ENCODE measurements at regions of chr5 and their contacts with region 1.

Region 1: DNA sequence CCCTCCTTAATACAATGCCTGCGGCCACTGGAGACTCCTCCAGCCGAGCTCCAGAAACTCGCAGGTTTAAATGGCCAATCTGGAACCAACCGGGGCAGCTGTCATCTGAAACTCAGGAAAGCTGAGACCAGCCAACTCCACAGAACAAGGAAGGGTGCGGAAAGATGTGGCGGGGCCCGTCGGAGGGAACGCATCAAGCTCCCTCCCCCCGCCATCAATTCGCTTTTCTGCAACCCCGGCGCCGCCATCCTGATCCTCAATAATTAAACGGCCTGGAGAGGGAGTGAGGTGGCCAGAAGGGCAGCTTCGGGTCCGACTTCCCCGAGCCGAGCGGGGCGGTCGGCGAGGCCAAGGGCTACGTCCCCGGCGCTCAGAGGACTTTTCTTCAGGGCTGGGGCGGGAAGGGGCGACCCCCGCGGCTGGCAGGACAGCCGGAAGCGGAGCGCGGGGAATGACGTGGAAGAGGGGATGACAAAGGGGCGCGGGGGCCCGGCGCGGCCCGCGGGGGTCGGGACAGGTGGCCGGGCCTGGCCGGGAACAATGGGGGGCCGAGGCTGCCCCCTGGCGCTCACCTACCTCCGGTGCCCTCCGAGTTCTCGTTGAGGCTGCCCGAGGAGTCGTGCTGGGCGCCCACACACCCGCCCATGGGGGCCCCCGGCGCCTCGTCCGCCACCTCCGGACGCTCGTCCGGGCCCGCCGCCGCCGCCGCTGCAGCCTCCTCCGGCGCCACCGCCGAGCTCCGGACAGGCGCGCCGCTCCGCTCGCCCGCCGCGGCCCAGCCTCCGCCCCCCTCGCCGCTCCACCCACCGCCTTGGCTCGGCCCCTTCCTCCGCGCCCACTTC is at the start of gene UBTD2:
- DNase-seq: peak; percentile 91
- H3K4me3 Mint-ChIP-seq: peak within 1 kb of the TSS; percentile 96
- H3K27ac Mint-ChIP-seq: peak within 1 kb of the TSS; percentile 92
- H3K4me1 Mint-ChIP-seq: peaks cover 13% of the 10 kb centered on the region
- H3K27me3 Mint-ChIP-seq: no peaks in the 10 kb centered on the region
- CTCF ChIP-seq: peak; percentile 80
- total RNA-seq, gene UBTD2: 18.8 and 21.1 TPM in 2 replicates

Region 2: DNA sequence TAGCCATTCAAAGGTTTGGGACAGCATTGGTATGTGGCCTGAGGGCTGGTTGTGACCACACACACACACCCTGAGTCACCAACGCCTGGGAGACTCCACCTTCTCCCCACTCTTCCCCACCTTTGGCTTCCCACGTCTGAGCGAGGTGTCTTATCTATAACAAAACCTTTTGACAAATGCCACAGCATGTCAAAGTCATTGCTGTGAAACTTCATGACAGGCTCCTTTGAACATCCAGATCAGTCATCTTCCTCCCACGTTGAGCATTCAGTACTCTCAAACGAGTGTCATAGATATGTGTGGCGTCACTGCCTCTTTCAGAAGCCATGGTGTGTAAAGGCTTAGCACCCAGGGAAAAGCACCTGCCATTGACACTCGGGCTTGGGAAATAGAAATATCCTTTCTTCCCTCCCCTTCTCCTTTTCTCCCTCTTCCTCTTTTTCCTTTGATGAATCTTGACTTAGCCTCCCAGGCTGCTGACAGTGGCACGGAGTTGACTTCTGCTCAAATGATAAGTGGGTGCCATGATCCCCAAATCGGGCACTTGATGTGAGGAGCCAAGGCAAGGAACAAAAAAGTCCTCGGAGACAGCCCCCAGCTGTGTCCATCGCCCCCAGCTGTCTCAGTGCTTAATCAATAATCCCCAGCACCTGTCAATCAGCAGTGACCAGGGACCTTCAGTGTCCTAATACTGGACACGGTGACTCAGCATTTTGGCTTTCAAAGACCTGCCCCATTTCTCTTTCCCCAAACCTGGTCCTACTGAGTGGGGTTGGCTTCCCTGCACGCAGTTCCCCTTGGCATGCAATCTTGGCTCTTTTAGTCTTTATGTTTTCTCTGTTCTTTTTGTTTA is 749.0 kb before region 1 on chr5:
- CTCF ChIA-PET with region 1: interaction called, 10 read pairs
- intact Hi-C with region 1: no loop called
- DNase-seq: no peak
- H3K4me3 Mint-ChIP-seq: no peak overlapping the region
- H3K27ac Mint-ChIP-seq: no peak overlapping the region
- H3K4me1 Mint-ChIP-seq: peaks cover 11% of the 10 kb centered on the region
- H3K27me3 Mint-ChIP-seq: peaks cover 32% of the 10 kb centered on the region
- CTCF ChIP-seq: no peak

Region 3: DNA sequence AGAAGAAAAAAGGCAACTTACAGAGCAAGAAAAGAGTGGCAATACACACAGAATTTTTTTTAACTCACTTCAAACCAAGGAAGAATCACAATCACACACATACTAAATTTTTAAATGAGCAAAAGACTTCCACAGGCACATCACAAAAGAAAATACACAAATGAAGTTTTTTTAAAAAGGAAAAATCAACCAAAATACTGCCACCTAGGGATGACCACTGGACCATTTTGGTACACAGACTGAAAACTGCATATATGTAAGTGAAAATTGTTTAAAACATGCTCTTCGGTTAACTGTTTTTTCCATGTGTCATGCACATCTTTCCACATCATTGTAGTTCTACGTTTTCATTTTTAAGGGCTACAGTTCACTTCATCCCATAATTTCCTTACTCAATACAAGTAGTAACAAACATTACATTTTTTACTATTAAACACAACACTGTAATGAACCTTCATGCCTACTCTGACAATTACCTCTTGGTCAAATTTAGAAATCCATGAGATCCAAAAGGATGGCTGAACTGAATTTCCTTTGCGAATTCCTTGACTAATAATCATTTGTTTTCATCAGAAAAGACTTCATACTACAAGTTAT is 355.8 kb before region 1 on chr5:
- CTCF ChIA-PET with region 1: no interaction called
- intact Hi-C with region 1: no loop called
- DNase-seq: no peak
- H3K4me3 Mint-ChIP-seq: no peak overlapping the region
- H3K27ac Mint-ChIP-seq: no peak overlapping the region
- H3K4me1 Mint-ChIP-seq: peaks cover 11% of the 10 kb centered on the region
- H3K27me3 Mint-ChIP-seq: no peaks in the 10 kb centered on the region
- CTCF ChIP-seq: peak; percentile 54

Region 4: GRCh38 chr5:172106511-172107356 is 176.5 kb before region 1 on chr5:
- CTCF ChIA-PET with region 1: interaction called, 7 read pairs
- intact Hi-C with region 1: loop called (anchors 2 kb)
- DNase-seq: peak; percentile 72
- H3K4me3 Mint-ChIP-seq: no peak overlapping the region
- H3K27ac Mint-ChIP-seq: no peak overlapping the region
- H3K4me1 Mint-ChIP-seq: peaks cover 36% of the 10 kb centered on the region
- H3K27me3 Mint-ChIP-seq: no peaks in the 10 kb centered on the region
- CTCF ChIP-seq: peak; percentile 98

Region 5: GRCh38 chr5:172188033-172188892 is 95.0 kb before region 1 on chr5 and contains the start of gene STK10:
- CTCF ChIA-PET with region 1: interaction called, 6 read pairs
- intact Hi-C with region 1: loop called (anchors 5 kb)
- DNase-seq: peak; percentile 96
- H3K4me3 Mint-ChIP-seq: peak within 1 kb of the TSS; percentile 81
- H3K27ac Mint-ChIP-seq: peak within 1 kb of the TSS; percentile 71
- H3K4me1 Mint-ChIP-seq: peaks cover 20% of the 10 kb centered on the region
- H3K27me3 Mint-ChIP-seq: peaks cover 15% of the 10 kb centered on the region
- CTCF ChIP-seq: peak; percentile 55
- total RNA-seq, gene STK10: 27.4 and 32.1 TPM in 2 replicates

Region 6: GRCh38 chr5:172235132-172235780 is 48.0 kb before region 1 on chr5:
- CTCF ChIA-PET with region 1: interaction called, 3 read pairs
- intact Hi-C with region 1: loop called (anchors 2 kb)
- DNase-seq: peak; percentile 9
- H3K4me3 Mint-ChIP-seq: peak overlapping the region; percentile 37
- H3K27ac Mint-ChIP-seq: peak overlapping the region; percentile 68
- H3K4me1 Mint-ChIP-seq: peaks cover 33% of the 10 kb centered on the region
- H3K27me3 Mint-ChIP-seq: no peaks in the 10 kb centered on the region
- CTCF ChIP-seq: no peak

Measured in Calu3 (cell line).